ENCODE measurements at regions of chr10 and their contacts with region 1.

Region 1: DNA sequence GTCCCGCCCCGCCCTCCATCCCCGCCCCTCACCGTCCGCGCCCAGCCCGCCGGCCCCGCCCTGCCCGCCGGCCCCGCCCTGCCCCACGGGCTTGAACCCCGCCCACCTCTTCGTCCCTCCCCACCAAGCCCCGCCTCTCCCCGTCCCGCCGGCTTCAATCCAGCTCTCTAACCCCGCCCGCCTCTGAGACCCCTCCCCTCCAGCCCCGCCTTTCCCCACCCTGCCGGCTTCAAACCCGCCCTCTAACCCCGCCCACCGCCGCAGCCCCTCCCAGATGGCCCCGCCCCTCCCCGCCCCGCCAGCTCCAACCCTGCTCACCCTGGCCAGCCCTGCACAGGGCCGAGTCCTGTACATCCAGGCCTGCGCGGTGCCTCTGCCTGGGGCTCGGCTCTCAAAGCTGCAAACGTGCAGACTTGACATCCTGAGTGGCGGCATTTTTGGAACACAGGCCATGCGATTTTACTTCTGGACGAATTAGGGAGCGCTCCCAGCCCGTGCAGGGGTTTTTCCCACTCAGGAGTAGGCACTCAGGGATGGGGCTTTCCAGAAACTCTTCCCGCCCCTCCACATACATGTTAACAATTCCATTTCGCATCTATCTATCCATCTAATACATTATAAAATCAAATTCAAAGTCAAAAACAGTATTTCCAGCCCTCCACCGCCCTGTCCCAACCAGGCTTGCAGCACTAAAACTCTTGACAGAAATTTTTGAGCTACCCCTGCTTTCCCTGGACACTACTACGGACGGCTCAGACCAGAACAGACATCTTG is 475 bp upstream of the NMT2 start:
- DNase-seq: peak; percentile 81 to 97
- ATAC-seq: peak; percentile 85 to 94 (median 86)
- H3K4me3 ChIP-seq: peak overlapping the region; percentile 12
- H3K4me3 Mint-ChIP-seq: peak overlapping the region; percentile 87
- H3K27ac ChIP-seq: peak overlapping the region; percentile 27
- H3K27ac Mint-ChIP-seq: peak overlapping the region; percentile 90 to 93
- H3K4me1 ChIP-seq: peaks cover 23% of the 10 kb centered on the region
- H3K4me1 Mint-ChIP-seq: peaks cover 49 to 55% of the 10 kb centered on the region in 2 donors
- H3K27me3 ChIP-seq: no peaks in the 10 kb centered on the region
- H3K27me3 Mint-ChIP-seq: no peaks in the 10 kb centered on the region
- CTCF ChIP-seq: no peak

Region 2: GRCh38 chr10:14954001-14954770 is 214.8 kb before region 1 on chr10 and contains the start of gene DCLRE1C:
- intact Hi-C with region 1: loop called (anchors 2 kb)
- DNase-seq: peak; percentile 88 to 92
- ATAC-seq: peak; percentile 90 to 97 (median 96)
- H3K4me3 ChIP-seq: peak within 1 kb of the TSS; percentile 86
- H3K4me3 Mint-ChIP-seq: peak within 1 kb of the TSS; percentile 97
- H3K27ac ChIP-seq: peak within 1 kb of the TSS; percentile 93
- H3K27ac Mint-ChIP-seq: peak within 1 kb of the TSS; percentile 94 to 95
- H3K4me1 ChIP-seq: peaks cover 34% of the 10 kb centered on the region
- H3K4me1 Mint-ChIP-seq: peaks cover 49 to 50% of the 10 kb centered on the region in 2 donors
- H3K27me3 ChIP-seq: no peaks in the 10 kb centered on the region
- H3K27me3 Mint-ChIP-seq: no peaks in the 10 kb centered on the region
- CTCF ChIP-seq: no peak
- total RNA-seq, gene DCLRE1C: 21.7 to 31.3 (median 22.3) TPM

Region 3: GRCh38 chr10:15208221-15208620 is 39.3 kb after region 1 on chr10:
- intact Hi-C with region 1: loop called (anchors 1 kb)
- DNase-seq: peak in 1 of 2 donors; percentile 31
- ATAC-seq: no peak
- H3K4me3 ChIP-seq: no peak overlapping the region
- H3K4me3 Mint-ChIP-seq: peak overlapping the region; percentile 87
- H3K27ac ChIP-seq: peak overlapping the region; percentile 92
- H3K27ac Mint-ChIP-seq: peak overlapping the region; percentile 82 to 84
- H3K4me1 ChIP-seq: peaks cover 27% of the 10 kb centered on the region
- H3K4me1 Mint-ChIP-seq: peaks cover 23 to 28% of the 10 kb centered on the region in 2 donors
- H3K27me3 ChIP-seq: no peaks in the 10 kb centered on the region
- H3K27me3 Mint-ChIP-seq: no peaks in the 10 kb centered on the region
- CTCF ChIP-seq: no peak

Region 4: GRCh38 chr10:15419279-15419874 is 250.4 kb after region 1 on chr10:
- intact Hi-C with region 1: no loop called
- DNase-seq: peak in 1 of 2 donors; percentile 68
- ATAC-seq: peak in 1 of 3 donors; percentile 61
- H3K4me3 ChIP-seq: no peak overlapping the region
- H3K4me3 Mint-ChIP-seq: no peak overlapping the region
- H3K27ac ChIP-seq: no peak overlapping the region
- H3K27ac Mint-ChIP-seq: no peak overlapping the region
- H3K4me1 ChIP-seq: no peaks in the 10 kb centered on the region
- H3K4me1 Mint-ChIP-seq: no peaks in the 10 kb centered on the region
- H3K27me3 ChIP-seq: no peaks in the 10 kb centered on the region
- H3K27me3 Mint-ChIP-seq: peaks cover 0 to 16% of the 10 kb centered on the region in 2 donors
- CTCF ChIP-seq: peak; percentile 85

Region 5: DNA sequence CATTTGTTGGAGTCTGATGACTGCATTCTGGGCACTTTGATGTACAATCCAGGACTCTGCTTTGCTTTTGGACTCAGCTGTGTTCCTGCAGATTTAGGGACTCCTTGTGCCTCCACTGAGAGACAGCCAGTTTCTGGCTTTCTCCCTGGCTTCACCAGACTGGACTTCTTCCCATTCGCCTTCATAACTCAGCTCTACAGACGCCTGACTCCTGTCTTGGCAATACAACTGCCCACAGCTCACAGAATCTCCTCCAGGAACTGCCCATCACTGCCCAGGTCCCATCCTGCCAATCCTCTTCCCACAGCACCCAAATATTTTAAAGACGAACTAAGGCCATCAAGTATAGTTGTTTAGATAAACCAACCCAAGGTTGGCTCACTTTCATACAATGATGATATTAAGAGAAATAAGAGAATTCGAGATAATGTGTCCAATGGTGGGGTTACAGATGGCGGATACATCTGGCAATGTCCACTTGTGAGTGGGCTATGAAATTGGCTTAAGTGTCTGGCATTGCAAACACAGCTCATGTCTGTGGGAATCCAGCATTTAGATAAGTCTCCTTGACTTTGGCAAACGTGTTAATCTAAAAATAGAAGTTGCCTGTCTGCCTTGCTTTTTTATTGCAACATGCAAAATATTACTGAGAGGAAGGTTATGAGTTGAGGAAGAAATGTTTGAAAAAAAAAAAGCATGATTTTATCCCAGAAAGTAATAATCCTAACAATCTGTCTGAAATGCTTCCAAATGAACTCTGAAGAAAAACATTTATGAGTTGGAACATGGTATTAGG is 455.6 kb after region 1 on chr10:
- intact Hi-C with region 1: no loop called
- DNase-seq: no peak
- ATAC-seq: no peak
- H3K4me3 ChIP-seq: no peak overlapping the region
- H3K4me3 Mint-ChIP-seq: no peak overlapping the region
- H3K27ac ChIP-seq: no peak overlapping the region
- H3K27ac Mint-ChIP-seq: no peak overlapping the region
- H3K4me1 ChIP-seq: no peaks in the 10 kb centered on the region
- H3K4me1 Mint-ChIP-seq: no peaks in the 10 kb centered on the region
- H3K27me3 ChIP-seq: no peaks in the 10 kb centered on the region
- H3K27me3 Mint-ChIP-seq: no peaks in the 10 kb centered on the region
- CTCF ChIP-seq: no peak

Measured in natural killer cell (primary cell).